Adrenal gland (tissue), 19 donors: ENCODE measurements at regions of chr10 and their contacts with region 1.

Region 1: GRCh38 chr10:26780793-26781601 is 79.8 kb downstream of the ABI1 start:
- DNase-seq: peak in 4 of 7 donors; percentile 14 to 35 (median 25)
- H3K4me3 ChIP-seq: no peak overlapping the region
- H3K27ac ChIP-seq: peak overlapping the region in 1 of 5 donors; percentile 49
- H3K4me1 ChIP-seq: peaks cover 6 to 21% of the 10 kb centered on the region in 2 donors
- H3K27me3 ChIP-seq: no peaks in the 10 kb centered on the region
- CTCF ChIP-seq: no peak
- POLR2A ChIP-seq: no peak

Region 2: GRCh38 chr10:26857991-26858706 is 77.2 kb after region 1 on chr10:
- intact Hi-C with region 1: loop called in 1 of 2 experiments (anchors 10 kb)
- DNase-seq: no peak
- H3K4me3 ChIP-seq: no peak overlapping the region
- H3K27ac ChIP-seq: no peak overlapping the region
- H3K4me1 ChIP-seq: peaks cover 6 to 37% of the 10 kb centered on the region in 2 donors
- H3K27me3 ChIP-seq: no peaks in the 10 kb centered on the region
- CTCF ChIP-seq: no peak
- POLR2A ChIP-seq: no peak